ENCODE measurements at regions of chr11 and their contacts with region 1.

Region 1: GRCh38 chr11:6682936-6683861 is at the start of gene MRPL17:
- DNase-seq: peak; percentile 95
- H3K4me3 ChIP-seq: peak within 1 kb of the TSS; percentile 99
- H3K27ac ChIP-seq: peak within 1 kb of the TSS; percentile 76 to 95
- H3K4me1 ChIP-seq: peaks cover 5 to 14% of the 10 kb centered on the region in 2 experiments; a peak in 3 of 4 replicates
- H3K27me3 ChIP-seq: no peaks in the 10 kb centered on the region
- CTCF ChIP-seq: peak; percentile 91
- EP300 ChIP-seq: peak in 1 of 2 experiments; percentile 13; a peak in 2 of 4 replicates
- RAD21 ChIP-seq: peak; percentile 81
- polyA plus RNA-seq, gene MRPL17: 88.3 and 88.6 TPM in 2 replicates

Region 2: DNA sequence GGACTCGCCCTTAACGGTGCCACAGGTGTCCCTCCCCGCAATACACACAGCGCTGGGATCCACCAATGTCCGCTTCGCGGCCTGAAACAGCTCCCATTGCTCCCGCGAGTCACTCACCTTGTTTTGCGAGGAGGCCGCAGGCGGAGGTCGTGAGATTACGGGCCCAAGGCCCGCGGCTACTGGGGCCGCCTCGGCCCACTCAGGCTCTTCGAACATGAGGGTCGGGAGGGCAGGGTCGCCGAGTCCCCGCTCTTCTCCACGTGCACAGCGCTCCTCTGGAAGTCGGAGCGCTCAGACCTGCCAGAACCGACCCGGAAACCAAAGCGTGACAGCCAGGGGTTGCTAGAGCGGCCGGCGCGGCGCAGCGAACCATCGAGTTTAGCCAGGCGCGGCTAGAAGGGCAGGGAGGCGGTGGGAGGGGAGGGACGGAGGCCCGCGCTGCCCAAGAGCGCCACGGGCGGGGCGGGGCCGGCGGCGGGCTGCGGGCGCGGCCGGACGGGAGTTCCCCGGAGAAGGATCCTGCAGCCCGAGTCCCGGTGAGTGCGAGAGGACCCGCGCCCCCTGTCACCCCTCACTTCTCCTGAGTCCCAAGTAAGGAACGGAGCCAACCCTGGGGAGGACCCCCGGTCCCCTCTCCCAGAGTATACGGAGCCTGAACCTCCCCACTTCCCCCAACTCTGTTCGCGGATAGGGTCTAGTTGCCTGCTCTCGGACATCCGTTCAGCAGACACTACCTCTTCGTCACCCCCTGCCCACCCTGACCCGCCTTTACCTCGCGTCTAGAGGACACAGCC is 79.7 kb before region 1 on chr11 and contains the starts of genes ILK and RRP8:
- CTCF ChIA-PET with region 1: interaction called, 13 read pairs
- POLR2A ChIA-PET with region 1: interaction called, 15 read pairs
- DNase-seq: peak; percentile 96
- H3K4me3 ChIP-seq: peak within 1 kb of the TSS; percentile 67 to 95
- H3K27ac ChIP-seq: peak within 1 kb of the TSS; percentile 79 to 91
- H3K4me1 ChIP-seq: peaks cover 26 to 40% of the 10 kb centered on the region in 2 experiments
- H3K27me3 ChIP-seq: no peaks in the 10 kb centered on the region
- CTCF ChIP-seq: no peak; the same call in 1 of the 2 replicates
- EP300 ChIP-seq: peak; percentile 8 to 35; a peak in 2 of 4 replicates
- RAD21 ChIP-seq: peak; percentile 5; the same call in 1 of the 2 replicates
- polyA plus RNA-seq, gene ILK: 241 and 268 TPM in 2 replicates
- polyA plus RNA-seq, gene RRP8: 7.8 and 8.6 TPM in 2 replicates

Region 3: GRCh38 chr11:6619004-6619745 is 64.0 kb before region 1 on chr11 and contains the start of gene TPP1:
- CTCF ChIA-PET with region 1: interaction called, 11 read pairs
- POLR2A ChIA-PET with region 1: interaction called, 6 read pairs
- DNase-seq: peak; percentile 97
- H3K4me3 ChIP-seq: peak within 1 kb of the TSS; percentile 68 to 90
- H3K27ac ChIP-seq: peak within 1 kb of the TSS; percentile 49 to 51; a peak in 2 of 4 replicates
- H3K4me1 ChIP-seq: peaks cover 7 to 9% of the 10 kb centered on the region in 2 experiments; a peak in 3 of 4 replicates
- H3K27me3 ChIP-seq: no peaks in the 10 kb centered on the region
- CTCF ChIP-seq: no peak
- EP300 ChIP-seq: no peak
- RAD21 ChIP-seq: no peak
- polyA plus RNA-seq, gene TPP1: 94.0 and 105 TPM in 2 replicates

Region 4: DNA sequence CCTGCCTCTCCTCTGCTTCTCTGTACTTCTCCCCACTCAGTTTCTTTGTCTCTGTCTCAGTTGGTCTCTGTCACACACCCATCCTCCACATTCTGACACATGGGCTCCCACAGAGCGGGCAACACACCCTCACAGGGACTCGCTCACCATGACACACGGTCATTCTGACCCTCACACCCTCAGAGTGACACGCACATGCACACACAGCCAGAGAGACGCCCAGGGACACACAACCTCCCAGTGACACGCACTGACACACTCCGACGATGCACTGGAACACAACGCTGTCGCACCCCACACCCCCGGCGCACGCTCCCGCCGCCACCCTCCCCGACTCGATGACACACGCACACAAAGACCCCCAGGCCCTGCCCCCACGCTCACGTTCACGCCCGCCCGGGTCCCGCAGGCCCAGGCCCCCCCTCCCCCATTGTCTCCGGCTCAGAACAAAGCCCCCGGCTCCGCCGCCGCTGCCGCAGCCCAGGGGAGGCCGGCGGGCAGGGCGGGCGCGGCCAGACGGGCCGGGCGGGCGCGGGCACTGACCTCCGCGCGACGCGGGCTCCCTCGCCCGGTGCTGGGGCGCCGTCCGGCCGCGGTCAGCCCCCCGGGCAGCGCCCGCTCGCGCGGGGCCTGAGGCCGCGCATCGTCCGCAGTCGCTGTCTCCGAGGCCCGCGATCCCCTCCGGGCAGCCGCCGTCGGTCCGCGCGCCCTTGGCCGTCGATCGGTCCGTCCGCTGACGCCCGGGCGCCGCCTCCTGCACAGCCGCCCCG is 28.0 kb before region 1 on chr11:
- CTCF ChIA-PET with region 1: interaction called, 10 read pairs
- POLR2A ChIA-PET with region 1: no interaction called
- DNase-seq: peak; percentile 78
- H3K4me3 ChIP-seq: peak overlapping the region; percentile 58 to 62
- H3K27ac ChIP-seq: peak overlapping the region in 1 of 2 experiments; percentile 71; a peak in 1 of 4 replicates
- H3K4me1 ChIP-seq: peaks cover 0 to 25% of the 10 kb centered on the region in 2 experiments; a peak in 1 of 4 replicates
- H3K27me3 ChIP-seq: no peaks in the 10 kb centered on the region
- CTCF ChIP-seq: no peak
- EP300 ChIP-seq: no peak
- RAD21 ChIP-seq: no peak

Region 5: GRCh38 chr11:6705905-6706535 is 22.8 kb after region 1 on chr11:
- CTCF ChIA-PET with region 1: interaction called, 10 read pairs
- POLR2A ChIA-PET with region 1: no interaction called
- DNase-seq: peak; percentile 47
- H3K4me3 ChIP-seq: no peak overlapping the region; a peak in 1 of 4 replicates
- H3K27ac ChIP-seq: no peak overlapping the region
- H3K4me1 ChIP-seq: 0 out of 4 replicates have a peak, but pooled peaks cover 0 to 2% of the 10 kb centered on the region in 2 experiments
- H3K27me3 ChIP-seq: no peaks in the 10 kb centered on the region; the same call in 1 of the 2 replicates
- CTCF ChIP-seq: peak; percentile 93
- EP300 ChIP-seq: no peak
- RAD21 ChIP-seq: peak; percentile 79